HEK293T (cell line): ENCODE measurements at regions of chr2 and their contacts with region 1.

Region 1: DNA sequence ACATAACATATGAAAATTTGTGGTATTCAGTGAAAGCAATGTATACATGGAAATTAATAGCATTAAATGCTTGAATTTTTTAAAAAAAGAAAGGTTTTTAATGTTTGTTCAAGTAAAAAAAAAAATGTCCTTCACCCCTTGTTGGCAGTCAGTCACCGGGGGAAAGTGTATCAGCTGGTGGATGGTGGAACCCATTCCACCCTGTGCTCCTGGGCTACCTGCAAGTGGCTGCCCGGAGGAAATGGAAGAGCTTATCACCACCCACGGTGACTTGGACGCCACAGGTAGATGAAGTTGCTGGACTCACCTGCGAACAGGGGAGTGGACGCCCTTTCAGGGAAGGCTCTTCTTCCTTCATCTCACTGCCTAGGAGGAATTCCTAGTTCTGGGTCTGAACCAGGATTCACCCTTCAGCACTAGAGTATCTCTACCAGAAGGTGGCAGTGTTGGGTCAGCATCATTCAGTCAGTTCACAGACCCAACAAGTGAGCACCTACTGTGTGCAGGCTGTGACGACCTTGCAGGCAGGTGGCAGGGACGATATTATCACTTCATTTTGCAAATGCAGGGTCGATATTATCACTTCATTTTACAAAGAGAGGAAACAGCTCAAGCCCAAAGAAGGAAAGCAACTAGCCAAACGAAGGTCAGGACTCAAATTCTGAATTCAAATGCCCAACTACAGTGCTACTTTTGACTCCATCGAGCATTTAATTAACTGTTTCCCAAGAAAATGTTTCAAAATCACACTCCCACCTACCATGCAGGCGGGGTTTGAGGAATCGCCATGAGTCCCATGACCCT is 35.8 kb downstream of the CIB4 start:
- DNase-seq: peak; percentile 65

Region 2: DNA sequence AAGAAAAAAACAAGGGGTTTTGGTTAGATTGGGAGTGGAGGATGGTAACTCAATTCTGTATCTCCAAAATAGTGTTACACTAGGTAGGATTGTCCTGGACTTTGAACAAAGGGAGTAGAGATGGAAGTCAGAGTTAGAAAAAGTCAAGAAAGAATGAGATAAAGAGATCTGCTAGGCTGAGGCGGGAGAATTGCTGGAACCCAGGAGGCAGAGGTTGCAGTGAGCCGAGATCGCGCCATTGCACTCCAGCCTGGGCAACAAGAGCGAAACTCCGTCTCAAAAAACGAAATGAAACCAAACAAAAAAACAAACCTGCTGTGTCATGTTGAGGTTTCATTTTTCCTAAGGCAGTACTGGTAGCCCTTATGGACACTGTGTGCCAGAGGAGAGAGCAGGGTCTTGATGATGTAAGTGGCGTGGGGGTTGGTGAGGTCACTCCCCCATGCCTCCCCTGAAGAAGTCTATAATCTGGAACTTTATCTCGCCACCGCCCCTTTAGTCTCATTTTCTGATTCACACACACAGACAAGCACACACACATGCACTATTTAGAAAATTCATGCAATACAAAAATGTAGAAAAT is 193.2 kb before region 1 on chr2:
- CTCF ChIA-PET with region 1: no interaction called
- POLR2A ChIA-PET with region 1: no interaction called
- DNase-seq: no peak

Region 3: GRCh38 chr2:26615821-26616710 is 10.7 kb after region 1 on chr2:
- CTCF ChIA-PET with region 1: no interaction called
- POLR2A ChIA-PET with region 1: no interaction called
- DNase-seq: no peak

Region 4: DNA sequence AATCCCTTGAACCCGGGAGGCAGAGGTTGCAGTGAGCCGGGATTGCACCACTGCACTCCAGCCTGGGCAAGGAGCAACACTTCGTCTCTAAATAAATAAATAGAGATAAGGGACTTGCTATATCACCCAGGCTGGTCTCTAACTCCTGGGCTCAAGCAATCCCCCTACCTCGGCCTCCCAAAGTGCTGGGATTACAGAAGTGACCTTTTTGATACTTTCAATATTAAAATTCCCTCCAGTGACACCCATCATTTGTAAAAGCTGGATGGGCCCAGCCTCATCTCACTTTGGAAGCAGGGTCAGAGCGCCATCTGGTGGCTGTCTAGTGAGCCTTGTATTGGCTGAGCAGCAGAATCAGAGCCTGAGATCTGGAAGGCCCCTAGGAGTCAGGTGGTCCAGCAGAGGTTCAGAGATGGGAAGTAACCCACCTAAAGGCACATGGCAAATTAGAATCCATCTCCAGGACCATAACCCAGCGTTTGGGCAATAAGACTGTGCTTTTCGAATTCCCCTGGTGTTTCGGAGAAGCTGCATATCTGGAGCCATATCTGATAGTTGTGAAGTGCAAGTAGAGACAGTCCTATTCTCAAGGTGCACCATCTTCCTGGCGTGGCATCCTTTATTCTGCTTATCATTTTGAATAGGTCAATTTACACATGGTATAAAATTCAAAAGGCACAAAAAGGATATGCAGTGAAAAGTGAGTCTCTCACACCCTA is 140.4 kb after region 1 on chr2:
- CTCF ChIA-PET with region 1: interaction called, 28 read pairs
- POLR2A ChIA-PET with region 1: interaction called, 3 read pairs
- DNase-seq: peak; percentile 83